A673 (cell line): ENCODE measurements at regions of chrX and their contacts with region 1.

Region 1: GRCh38 chrX:24054182-24055042 is at the start of gene EIF2S3:
- DNase-seq: peak; percentile 98
- H3K4me3 ChIP-seq: no peak within 1 kb of the TSS
- H3K27ac ChIP-seq: no peak within 1 kb of the TSS
- H3K4me1 ChIP-seq: peaks cover 3% of the 10 kb centered on the region
- H3K27me3 ChIP-seq: no peaks in the 10 kb centered on the region
- CTCF ChIP-seq: peak; percentile 88
- total RNA-seq, gene EIF2S3: 218 and 225 TPM in 2 replicates

Region 2: GRCh38 chrX:22810876-22811275 is 1243.5 kb before region 1 on chrX:
- CTCF ChIA-PET with region 1: no interaction called
- POLR2A ChIA-PET with region 1: interaction called, 14 read pairs
- intact Hi-C with region 1: no loop called
- DNase-seq: no peak
- H3K4me3 ChIP-seq: no peak overlapping the region
- H3K27ac ChIP-seq: no peak overlapping the region
- H3K4me1 ChIP-seq: no peaks in the 10 kb centered on the region
- H3K27me3 ChIP-seq: no peaks in the 10 kb centered on the region
- CTCF ChIP-seq: no peak

Region 3: DNA sequence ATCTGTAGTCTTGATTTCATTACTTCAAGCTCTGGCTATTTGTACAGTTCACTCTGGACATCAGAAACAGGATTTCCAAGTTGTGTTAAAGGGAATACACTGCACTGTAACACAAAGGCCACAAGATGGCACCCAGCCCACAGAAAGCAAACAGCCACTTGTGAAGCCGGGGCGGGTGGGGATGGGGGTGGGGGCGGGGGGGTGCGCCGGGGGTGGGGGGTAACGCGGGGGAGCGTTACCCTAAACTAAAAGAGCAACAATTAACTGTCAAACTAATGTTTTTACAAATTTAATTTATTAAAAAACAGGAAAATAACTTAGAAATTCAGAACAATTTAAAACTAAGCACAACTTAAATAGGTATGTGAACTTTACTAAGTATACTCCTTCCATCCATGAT is 359.8 kb before region 1 on chrX:
- CTCF ChIA-PET with region 1: no interaction called
- POLR2A ChIA-PET with region 1: no interaction called
- intact Hi-C with region 1: loop called (anchors 10 kb)
- DNase-seq: peak; percentile 75
- H3K4me3 ChIP-seq: no peak overlapping the region
- H3K27ac ChIP-seq: no peak overlapping the region
- H3K4me1 ChIP-seq: no peaks in the 10 kb centered on the region
- H3K27me3 ChIP-seq: no peaks in the 10 kb centered on the region
- CTCF ChIP-seq: peak; percentile 53

Region 4: GRCh38 chrX:23871905-23872546 is 182.4 kb before region 1 on chrX:
- CTCF ChIA-PET with region 1: no interaction called
- POLR2A ChIA-PET with region 1: no interaction called
- intact Hi-C with region 1: no loop called
- DNase-seq: no peak
- H3K4me3 ChIP-seq: no peak overlapping the region
- H3K27ac ChIP-seq: no peak overlapping the region
- H3K4me1 ChIP-seq: no peaks in the 10 kb centered on the region
- H3K27me3 ChIP-seq: no peaks in the 10 kb centered on the region
- CTCF ChIP-seq: no peak

Region 5: DNA sequence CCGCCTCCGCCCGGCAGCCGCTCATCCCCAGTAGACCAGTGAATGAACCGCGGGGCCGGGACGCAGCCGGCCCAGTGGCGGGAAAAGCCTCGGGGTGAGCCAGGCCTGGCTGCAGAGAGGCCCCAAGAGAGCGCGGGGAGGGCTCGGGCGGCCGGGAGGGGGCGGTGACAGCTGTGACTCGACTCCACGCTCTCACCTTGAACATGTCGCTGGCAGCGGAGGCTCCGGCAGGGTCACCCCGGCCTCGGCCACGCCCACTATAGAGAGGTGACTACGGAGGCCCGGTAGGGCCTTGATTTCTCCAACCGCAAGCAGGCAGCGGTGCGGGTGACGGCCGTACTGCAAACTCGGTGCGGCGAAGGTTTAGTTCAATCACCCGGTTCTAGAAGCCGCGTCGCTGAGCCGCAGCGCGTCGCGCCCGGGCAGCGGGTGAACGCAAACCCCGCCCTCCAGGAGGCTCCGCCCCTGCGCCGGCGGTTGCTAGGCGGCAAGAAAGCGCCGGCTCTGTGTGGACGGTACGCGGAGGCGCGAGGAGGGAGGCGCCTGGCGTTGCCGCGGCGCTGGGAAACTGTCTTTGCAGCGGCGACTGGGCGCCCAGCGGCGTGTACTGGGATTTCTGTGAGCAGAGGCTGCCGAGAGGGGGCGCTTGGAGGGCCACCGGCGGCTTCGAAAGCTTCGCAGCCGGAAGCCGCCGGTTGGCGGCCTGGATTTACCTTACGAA is 146.8 kb before region 1 on chrX and contains the starts of genes APOO and CXorf58:
- CTCF ChIA-PET with region 1: interaction called, 12 read pairs
- POLR2A ChIA-PET with region 1: no interaction called
- intact Hi-C with region 1: loop called (anchors 1 kb)
- DNase-seq: peak; percentile 94
- H3K4me3 ChIP-seq: peak within 1 kb of the TSS; percentile 74
- H3K27ac ChIP-seq: peak within 1 kb of the TSS; percentile 84
- H3K4me1 ChIP-seq: no peaks in the 10 kb centered on the region
- H3K27me3 ChIP-seq: no peaks in the 10 kb centered on the region
- CTCF ChIP-seq: peak; percentile 75
- total RNA-seq, gene APOO: 74.2 and 79.0 TPM in 2 replicates
- total RNA-seq, gene CXorf58: not detected in 2 replicates

Region 6: GRCh38 chrX:24024819-24025740 is 29.3 kb before region 1 on chrX:
- CTCF ChIA-PET with region 1: interaction called, 14 read pairs
- POLR2A ChIA-PET with region 1: interaction called, 6 read pairs
- intact Hi-C with region 1: loop called (anchors 1 kb)
- DNase-seq: peak; percentile 91
- H3K4me3 ChIP-seq: peak overlapping the region; percentile 93
- H3K27ac ChIP-seq: peak overlapping the region; percentile 95
- H3K4me1 ChIP-seq: peaks cover 4% of the 10 kb centered on the region
- H3K27me3 ChIP-seq: peaks cover 4% of the 10 kb centered on the region
- CTCF ChIP-seq: no peak

Region 7: DNA sequence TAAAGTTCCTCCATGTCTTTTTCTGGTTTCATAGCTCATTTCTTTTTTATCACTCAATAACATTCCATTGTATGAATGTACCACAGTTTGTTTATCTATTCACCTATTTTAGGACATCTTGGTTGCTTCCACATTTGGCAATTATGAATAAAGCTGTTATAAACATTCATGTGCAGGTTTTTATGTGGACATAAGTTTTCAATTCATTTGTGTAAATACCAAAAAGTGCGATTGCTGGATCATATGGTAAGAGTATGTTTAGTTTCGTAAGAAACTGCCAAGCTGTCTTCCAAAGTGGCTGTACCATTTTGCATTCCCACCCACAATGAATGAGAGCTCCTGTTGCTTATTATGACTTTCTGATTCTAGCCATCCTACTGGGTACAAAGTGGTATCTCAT is 58.8 kb after region 1 on chrX:
- CTCF ChIA-PET with region 1: no interaction called
- POLR2A ChIA-PET with region 1: interaction called, 12 read pairs
- intact Hi-C with region 1: no loop called
- DNase-seq: no peak
- H3K4me3 ChIP-seq: no peak overlapping the region
- H3K27ac ChIP-seq: no peak overlapping the region
- H3K4me1 ChIP-seq: no peaks in the 10 kb centered on the region
- H3K27me3 ChIP-seq: peaks cover 1% of the 10 kb centered on the region
- CTCF ChIP-seq: no peak

Region 8: DNA sequence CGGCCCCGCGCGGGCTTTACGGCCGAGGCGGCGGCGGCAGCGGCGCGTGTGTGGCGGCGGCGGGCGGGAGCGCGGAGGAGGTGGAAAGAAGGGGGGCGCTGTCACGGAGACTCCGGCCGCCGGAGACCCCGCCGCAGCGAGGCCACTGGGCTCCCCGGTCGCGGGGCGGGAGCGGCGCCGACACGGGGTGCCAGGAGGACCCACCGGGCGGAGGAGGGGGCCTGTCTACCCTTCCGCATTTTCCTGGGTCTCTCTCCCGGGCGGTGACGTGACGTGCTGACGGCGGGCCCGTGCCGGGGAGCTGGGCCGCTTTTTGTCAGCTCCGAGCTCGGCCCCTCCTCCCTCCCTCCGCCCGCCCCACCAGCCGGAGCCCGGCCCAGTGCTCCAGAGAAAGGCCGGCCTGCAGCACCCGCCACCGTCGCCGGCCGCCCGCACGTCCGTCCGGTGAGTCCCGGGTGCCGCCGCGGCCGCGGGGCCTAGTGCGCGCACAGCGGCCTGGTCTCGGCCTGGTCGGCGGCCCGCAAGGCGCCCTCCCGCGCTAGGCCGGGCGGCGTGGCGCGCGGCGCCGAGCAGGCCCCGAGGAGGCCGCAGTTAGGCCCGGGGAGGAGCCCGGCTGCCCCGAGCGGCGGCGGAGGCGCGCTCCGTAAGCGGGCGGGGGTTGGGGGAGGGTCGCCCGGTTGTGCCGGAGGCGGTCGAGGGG is 95.1 kb after region 1 on chrX and contains the start of gene ZFX:
- CTCF ChIA-PET with region 1: no interaction called
- POLR2A ChIA-PET with region 1: no interaction called
- intact Hi-C with region 1: loop called (anchors 2 kb)
- DNase-seq: peak; percentile 82
- H3K4me3 ChIP-seq: peak within 1 kb of the TSS; percentile 75
- H3K27ac ChIP-seq: peak within 1 kb of the TSS; percentile 97
- H3K4me1 ChIP-seq: peaks cover 56% of the 10 kb centered on the region
- H3K27me3 ChIP-seq: no peaks in the 10 kb centered on the region
- CTCF ChIP-seq: no peak
- total RNA-seq, gene ZFX: 63.9 and 64.6 TPM in 2 replicates

Region 9: GRCh38 chrX:24720036-24720435 is 665.6 kb after region 1 on chrX:
- CTCF ChIA-PET with region 1: no interaction called
- POLR2A ChIA-PET with region 1: no interaction called
- intact Hi-C with region 1: no loop called
- DNase-seq: no peak
- H3K4me3 ChIP-seq: no peak overlapping the region
- H3K27ac ChIP-seq: no peak overlapping the region
- H3K4me1 ChIP-seq: no peaks in the 10 kb centered on the region
- H3K27me3 ChIP-seq: no peaks in the 10 kb centered on the region
- CTCF ChIP-seq: no peak